ENCODE measurements at regions of chr12 and their contacts with region 1.

Region 1: DNA sequence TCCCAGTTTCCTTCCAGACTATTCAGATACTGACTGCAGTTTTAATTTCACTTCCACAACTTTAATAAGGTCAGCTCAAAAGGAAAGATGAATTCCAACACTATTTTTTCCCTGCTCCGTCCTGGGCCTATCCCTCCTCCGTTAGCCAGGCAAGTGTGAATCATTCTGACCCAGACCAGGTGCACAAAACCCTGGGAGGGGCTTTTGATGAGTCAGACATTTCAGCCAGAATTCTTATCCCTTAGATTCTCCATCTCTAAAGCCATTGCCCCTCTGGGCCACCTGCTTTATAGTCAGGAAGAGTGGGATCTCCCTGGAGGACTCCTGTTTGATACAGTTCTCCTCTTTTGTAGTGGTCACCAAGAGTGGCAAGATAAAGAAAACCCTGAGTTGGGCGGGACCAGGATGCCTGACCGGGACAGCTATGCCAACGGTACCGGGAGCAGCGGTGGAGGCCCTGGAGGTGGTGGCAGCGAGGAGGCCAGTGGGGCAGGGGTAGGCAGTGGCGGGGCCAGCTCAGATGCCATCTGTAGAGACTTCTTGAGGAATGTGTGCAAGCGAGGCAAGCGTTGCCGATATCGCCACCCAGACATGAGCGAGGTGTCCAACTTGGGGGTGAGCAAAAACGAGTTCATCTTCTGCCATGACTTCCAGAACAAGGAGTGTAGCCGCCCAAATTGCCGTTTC is 2.2 kb downstream of the ZC3H10 start:
- DNase-seq: no peak
- ATAC-seq: no peak
- H3K4me3 ChIP-seq: no peak overlapping the region
- H3K27ac ChIP-seq: peak overlapping the region in 2 of 4 donors; percentile 92 to 97
- H3K4me1 ChIP-seq: peaks cover 22% of the 10 kb centered on the region
- H3K27me3 ChIP-seq: no peaks in the 10 kb centered on the region
- CTCF ChIP-seq: no peak
- POLR2A ChIP-seq: no peak

Region 2: DNA sequence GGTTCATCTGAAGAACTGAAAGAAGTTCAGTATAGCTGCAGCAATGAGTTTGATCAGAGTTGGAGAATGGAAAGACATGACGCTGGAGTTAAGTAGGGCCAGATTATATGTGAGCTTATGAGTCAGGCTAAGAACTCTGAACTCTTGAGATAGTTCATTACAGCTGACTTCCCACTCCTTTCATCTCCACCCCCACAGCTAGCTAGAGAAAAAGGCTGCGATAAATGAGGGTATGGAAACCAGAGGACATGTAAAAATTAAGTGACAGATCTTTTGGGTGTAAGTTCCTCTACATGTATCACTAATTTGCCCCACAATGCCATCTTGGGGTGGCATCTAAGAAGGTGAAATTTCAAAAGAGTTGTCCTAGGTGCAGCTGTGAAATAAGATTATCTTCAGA is 221.2 kb before region 1 on chr12:
- intact Hi-C with region 1: no loop called
- DNase-seq: no peak
- ATAC-seq: no peak
- H3K4me3 ChIP-seq: no peak overlapping the region
- H3K27ac ChIP-seq: no peak overlapping the region
- H3K4me1 ChIP-seq: no peaks in the 10 kb centered on the region
- H3K27me3 ChIP-seq: no peaks in the 10 kb centered on the region
- CTCF ChIP-seq: no peak
- POLR2A ChIP-seq: no peak

Region 3: GRCh38 chr12:56186957-56187356 is 66.7 kb after region 1 on chr12:
- intact Hi-C with region 1: loop called (anchors 2 kb)
- DNase-seq: no peak
- ATAC-seq: no peak
- H3K4me3 ChIP-seq: no peak overlapping the region
- H3K27ac ChIP-seq: peak overlapping the region in 1 of 4 donors; percentile 96
- H3K4me1 ChIP-seq: peaks cover 25% of the 10 kb centered on the region
- H3K27me3 ChIP-seq: no peaks in the 10 kb centered on the region
- CTCF ChIP-seq: no peak
- POLR2A ChIP-seq: no peak

Region 4: DNA sequence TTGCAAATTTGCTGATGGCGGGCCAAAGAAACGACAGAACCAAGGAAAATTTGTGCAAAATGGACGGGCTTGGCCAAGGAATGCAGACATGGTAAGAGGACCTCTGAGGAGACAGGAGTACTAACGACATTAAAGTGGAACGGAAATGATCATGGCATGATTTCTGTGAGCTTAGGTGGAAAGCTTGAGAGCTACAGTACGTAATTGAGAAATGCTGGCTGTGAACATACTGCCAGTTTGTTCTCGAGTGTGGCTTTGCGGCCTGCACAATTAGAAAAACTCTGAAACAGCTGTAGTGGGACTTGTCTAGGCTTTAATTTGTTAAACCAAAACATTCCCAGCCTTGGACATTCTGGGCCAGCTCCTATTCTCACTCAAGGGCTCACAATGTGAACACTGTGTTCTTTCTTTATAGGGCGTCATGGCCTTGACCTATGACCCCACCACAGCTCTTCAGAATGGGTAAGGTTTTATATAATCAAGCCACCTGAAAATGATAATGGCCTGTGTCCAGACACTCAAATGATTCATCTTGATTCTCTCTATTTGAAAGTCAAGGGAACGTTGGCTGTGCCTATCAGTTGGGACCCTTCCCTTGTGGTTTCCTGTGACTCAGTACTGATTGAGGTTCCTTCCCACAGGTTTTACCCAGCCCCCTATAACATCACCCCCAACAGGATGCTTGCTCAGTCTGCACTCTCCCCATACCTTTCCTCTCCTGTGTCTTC is 461.3 kb after region 1 on chr12:
- intact Hi-C with region 1: no loop called
- DNase-seq: no peak
- ATAC-seq: no peak
- H3K4me3 ChIP-seq: no peak overlapping the region
- H3K27ac ChIP-seq: no peak overlapping the region
- H3K4me1 ChIP-seq: no peaks in the 10 kb centered on the region
- H3K27me3 ChIP-seq: no peaks in the 10 kb centered on the region
- CTCF ChIP-seq: no peak
- POLR2A ChIP-seq: no peak